ENCODE measurements at regions of chr20 and their contacts with region 1.

Region 1: GRCh38 chr20:54199721-54200176 is 8.1 kb upstream of the PFDN4 start:
- DNase-seq: peak; percentile 27 to 51
- ATAC-seq: peak; percentile 50 to 70
- H3K4me3 ChIP-seq: no peak overlapping the region
- H3K27ac ChIP-seq: no peak overlapping the region
- H3K4me1 ChIP-seq: no peaks in the 10 kb centered on the region
- H3K27me3 ChIP-seq: peaks cover 0 to 4% (median 0%) of the 10 kb centered on the region in 3 donors
- CTCF ChIP-seq: peak; percentile 49 to 85 (median 71)
- POLR2A ChIP-seq: no peak

Region 2: DNA sequence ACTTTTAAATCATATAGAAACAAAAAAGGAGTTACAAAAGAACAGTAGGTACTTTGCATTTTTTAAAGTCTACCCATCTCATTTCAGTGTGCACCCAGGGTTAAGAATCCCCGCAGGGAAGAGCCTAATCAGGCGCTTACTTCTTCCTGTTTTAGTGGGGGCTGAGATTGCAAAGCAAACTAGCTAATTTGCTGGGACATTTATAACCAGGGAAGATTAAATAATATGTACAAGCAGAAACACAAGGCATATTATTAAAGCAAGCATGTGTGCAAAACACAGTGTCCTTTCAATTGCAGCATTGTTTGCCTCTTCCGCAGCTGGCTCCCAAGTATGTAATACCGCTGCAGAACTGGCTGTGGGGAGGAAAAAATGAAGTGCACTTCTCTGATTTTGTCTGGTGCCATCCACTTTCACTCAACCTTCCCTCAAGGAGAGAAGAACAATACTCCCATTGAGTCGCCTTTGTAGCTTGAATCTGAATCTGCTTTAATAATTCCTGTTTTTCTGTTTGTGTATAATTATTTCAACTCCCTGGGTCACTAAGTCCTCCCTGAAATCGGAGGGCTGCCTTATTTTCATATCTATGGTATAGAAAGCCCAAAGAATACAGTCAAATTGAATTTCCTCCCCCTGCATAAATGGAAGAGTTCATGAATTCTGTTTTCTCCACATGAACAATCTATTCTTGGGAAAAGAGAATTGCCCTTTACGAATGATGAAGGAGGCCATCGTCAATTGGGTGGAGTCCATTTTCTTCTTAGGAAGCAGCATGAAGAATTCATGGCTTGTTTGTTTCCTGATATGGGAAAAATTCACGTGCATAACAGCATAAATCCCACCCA is 106.1 kb before region 1 on chr20:
- in situ Hi-C with region 1: no loop called
- intact Hi-C with region 1: loop called (anchors 1 kb)
- DNase-seq: no peak
- ATAC-seq: no peak
- H3K4me3 ChIP-seq: no peak overlapping the region
- H3K27ac ChIP-seq: no peak overlapping the region
- H3K4me1 ChIP-seq: no peaks in the 10 kb centered on the region
- H3K27me3 ChIP-seq: no peaks in the 10 kb centered on the region
- CTCF ChIP-seq: no peak
- POLR2A ChIP-seq: no peak

Region 3: DNA sequence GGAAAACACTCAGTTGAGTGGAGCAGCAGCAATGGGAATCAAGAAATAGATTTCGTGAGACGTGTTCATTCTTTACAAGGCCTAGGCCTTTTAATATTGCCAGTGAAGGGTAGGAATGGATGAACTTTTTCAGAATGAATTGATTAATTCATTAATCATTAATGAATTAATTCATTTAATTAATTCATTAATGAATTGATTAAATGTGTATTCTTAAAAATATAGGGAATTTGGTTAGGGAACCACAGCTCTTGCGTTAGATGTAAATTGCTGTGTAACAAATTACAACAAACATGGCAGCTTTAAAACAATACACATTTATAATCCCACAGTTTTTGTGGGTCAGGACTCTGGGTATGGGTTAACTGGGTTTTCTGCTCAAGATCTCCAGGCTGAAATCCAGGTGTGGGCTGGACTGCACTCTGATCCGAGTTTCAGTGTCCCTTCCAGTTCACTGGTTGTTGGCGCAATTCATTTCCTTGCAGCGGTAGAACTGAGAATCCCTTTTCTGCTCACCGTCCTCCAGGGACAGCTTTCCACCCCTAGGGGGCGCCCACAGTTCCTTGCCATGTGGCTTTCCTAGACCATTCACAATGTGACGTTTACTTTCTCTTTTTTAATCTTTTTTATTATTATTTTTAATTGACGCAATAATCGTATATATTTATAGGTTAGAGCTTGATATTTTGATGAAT is 96.5 kb before region 1 on chr20:
- in situ Hi-C with region 1: loop called in 3 of 4 experiments (anchors 5 to 10 kb)
- intact Hi-C with region 1: no loop called
- DNase-seq: peak in 1 of 2 donors; percentile 9
- ATAC-seq: no peak
- H3K4me3 ChIP-seq: no peak overlapping the region
- H3K27ac ChIP-seq: no peak overlapping the region
- H3K4me1 ChIP-seq: no peaks in the 10 kb centered on the region
- H3K27me3 ChIP-seq: no peaks in the 10 kb centered on the region
- CTCF ChIP-seq: peak in 4 of 5 experiments; percentile 22 to 67 (median 44)
- POLR2A ChIP-seq: no peak

Measured in gastrocnemius medialis (tissue), 4 donors.